CD4-positive, alpha-beta memory T cell (primary cell): ENCODE measurements at regions of chr4 and their contacts with region 1.

Region 1: DNA sequence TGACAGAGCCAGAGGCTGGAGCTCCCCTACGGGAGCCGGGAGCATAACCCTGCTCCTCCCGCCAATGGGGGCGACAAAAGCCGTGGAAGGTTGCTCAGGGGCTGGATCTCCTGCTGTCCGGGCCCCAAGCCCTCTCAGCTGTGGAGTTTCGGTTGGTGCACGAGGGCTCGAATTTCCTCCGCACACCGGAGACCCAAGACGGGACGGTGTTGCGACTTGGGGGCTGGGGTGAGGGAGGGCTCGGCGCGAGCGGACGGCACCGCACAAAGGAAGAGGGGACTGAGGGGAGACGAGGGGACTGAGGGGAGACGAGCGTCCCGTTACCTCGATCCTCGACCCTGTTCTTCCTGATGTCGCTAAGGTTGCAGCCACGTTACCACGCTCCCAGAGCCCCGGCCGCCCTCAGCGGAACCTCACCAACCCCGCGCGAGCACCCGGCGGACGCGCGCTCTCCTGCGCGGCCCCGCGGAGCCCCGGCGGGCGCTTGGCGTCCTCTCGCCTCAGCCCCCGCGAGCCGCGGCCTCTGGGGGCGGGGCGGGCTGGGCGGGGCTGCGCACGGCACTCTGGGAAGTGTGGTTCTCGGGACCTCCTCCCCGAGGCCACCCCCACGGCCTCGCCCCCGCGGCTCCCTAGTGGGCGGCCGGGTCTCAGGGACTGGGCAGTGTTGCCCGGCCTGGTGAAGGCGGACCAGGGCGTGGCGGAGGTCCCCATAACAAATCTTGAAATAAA is at the start of gene KLHL8:
- DNase-seq: peak; percentile 84 to 91 (median 90)
- H3K4me3 ChIP-seq: peak within 1 kb of the TSS; percentile 82 to 89
- H3K4me3 Mint-ChIP-seq: peak within 1 kb of the TSS; percentile 91 to 98 (median 95)
- H3K27ac ChIP-seq: peak within 1 kb of the TSS; percentile 85
- H3K27ac Mint-ChIP-seq: peak within 1 kb of the TSS; percentile 81 to 96 (median 94)
- H3K4me1 ChIP-seq: peaks cover 16% of the 10 kb centered on the region
- H3K4me1 Mint-ChIP-seq: peaks cover 9 to 23% (median 16%) of the 10 kb centered on the region in 4 donors
- H3K27me3 ChIP-seq: no peaks in the 10 kb centered on the region
- H3K27me3 Mint-ChIP-seq: no peaks in the 10 kb centered on the region
- total RNA-seq, gene KLHL8: 11.0 to 11.4 TPM

Region 2: GRCh38 chr4:86367577-86367976 is 852.7 kb before region 1 on chr4:
- CTCF ChIA-PET with region 1: no interaction called
- POLR2A ChIA-PET with region 1: no interaction called
- intact Hi-C with region 1: no loop called
- DNase-seq: no peak
- H3K4me3 ChIP-seq: no peak overlapping the region
- H3K4me3 Mint-ChIP-seq: no peak overlapping the region
- H3K27ac ChIP-seq: no peak overlapping the region
- H3K27ac Mint-ChIP-seq: no peak overlapping the region
- H3K4me1 ChIP-seq: no peaks in the 10 kb centered on the region
- H3K4me1 Mint-ChIP-seq: no peaks in the 10 kb centered on the region
- H3K27me3 ChIP-seq: no peaks in the 10 kb centered on the region
- H3K27me3 Mint-ChIP-seq: peaks cover 0 to 1% of the 10 kb centered on the region in 2 donors

Region 3: GRCh38 chr4:87179751-87180150 is 40.5 kb before region 1 on chr4:
- CTCF ChIA-PET with region 1: no interaction called
- POLR2A ChIA-PET with region 1: no interaction called
- intact Hi-C with region 1: loop called (anchors 5 kb)
- DNase-seq: no peak
- H3K4me3 ChIP-seq: no peak overlapping the region
- H3K4me3 Mint-ChIP-seq: no peak overlapping the region
- H3K27ac ChIP-seq: no peak overlapping the region
- H3K27ac Mint-ChIP-seq: no peak overlapping the region
- H3K4me1 ChIP-seq: no peaks in the 10 kb centered on the region
- H3K4me1 Mint-ChIP-seq: peaks cover 0 to 2% (median 0%) of the 10 kb centered on the region in 4 donors
- H3K27me3 ChIP-seq: no peaks in the 10 kb centered on the region
- H3K27me3 Mint-ChIP-seq: no peaks in the 10 kb centered on the region

Region 4: DNA sequence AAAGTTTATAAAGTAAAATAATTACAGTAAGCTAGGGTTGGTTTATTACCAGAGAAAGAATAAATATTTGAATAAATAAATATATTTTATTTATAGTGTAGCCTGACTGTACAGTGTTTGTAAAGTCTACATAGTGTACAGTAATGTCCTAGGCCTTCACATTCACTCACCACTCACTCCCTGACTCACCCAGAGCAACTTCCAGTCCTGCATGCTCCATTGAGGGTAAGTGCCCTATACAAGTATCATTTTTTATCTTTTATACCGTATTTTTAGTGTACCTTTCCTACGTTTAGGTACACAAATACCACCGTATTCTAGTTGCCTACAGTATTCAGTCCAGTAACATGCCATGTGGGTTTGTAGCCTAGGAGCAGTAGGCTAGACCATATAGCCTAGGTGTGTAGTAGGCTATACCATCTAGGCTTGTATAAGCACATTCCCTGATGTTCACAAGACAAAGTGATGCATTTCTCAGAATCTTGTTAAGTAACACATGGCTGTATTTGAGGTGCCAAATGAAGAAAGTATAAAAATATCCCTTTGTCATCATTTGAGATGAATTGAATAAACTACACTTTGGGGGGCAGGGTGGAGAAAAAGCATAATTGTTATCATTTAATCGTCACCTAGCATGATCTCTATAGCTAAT is 14.9 kb after region 1 on chr4:
- CTCF ChIA-PET with region 1: interaction called, 42 read pairs
- POLR2A ChIA-PET with region 1: interaction called, 12 read pairs
- intact Hi-C with region 1: loop called (anchors 1 kb)
- DNase-seq: no peak
- H3K4me3 ChIP-seq: peak overlapping the region in 1 of 2 donors; percentile 47
- H3K4me3 Mint-ChIP-seq: peak overlapping the region in 6 of 8 donors; percentile 80 to 92 (median 84)
- H3K27ac ChIP-seq: no peak overlapping the region
- H3K27ac Mint-ChIP-seq: peak overlapping the region in 2 of 7 donors; percentile 1 to 50
- H3K4me1 ChIP-seq: peaks cover 5% of the 10 kb centered on the region
- H3K4me1 Mint-ChIP-seq: peaks cover 0 to 7% (median under 1%) of the 10 kb centered on the region in 4 donors
- H3K27me3 ChIP-seq: peaks cover 4% of the 10 kb centered on the region
- H3K27me3 Mint-ChIP-seq: peaks cover 2 to 6% of the 10 kb centered on the region in 2 donors

Region 5: GRCh38 chr4:87390891-87391575 is 170.8 kb after region 1 on chr4 and contains the start of gene HSD17B11:
- CTCF ChIA-PET with region 1: no interaction called
- POLR2A ChIA-PET with region 1: no interaction called
- intact Hi-C with region 1: loop called (anchors 1 kb)
- DNase-seq: peak; percentile 80 to 88 (median 83)
- H3K4me3 ChIP-seq: peak within 1 kb of the TSS; percentile 87 to 90
- H3K4me3 Mint-ChIP-seq: peak within 1 kb of the TSS; percentile 89 to 99 (median 96)
- H3K27ac ChIP-seq: peak within 1 kb of the TSS; percentile 74
- H3K27ac Mint-ChIP-seq: peak within 1 kb of the TSS; percentile 82 to 98 (median 94)
- H3K4me1 ChIP-seq: peaks cover 41% of the 10 kb centered on the region
- H3K4me1 Mint-ChIP-seq: peaks cover 31 to 50% (median 42%) of the 10 kb centered on the region in 4 donors
- H3K27me3 ChIP-seq: no peaks in the 10 kb centered on the region
- H3K27me3 Mint-ChIP-seq: no peaks in the 10 kb centered on the region
- total RNA-seq, gene HSD17B11: 69.7 to 69.8 TPM